ENCODE measurements at regions of chr12 and their contacts with region 1.

Region 1: GRCh38 chr12:89826468-89826867 is 117.8 kb upstream of the ATP2B1 start:
- DNase-seq: no peak
- H3K4me3 ChIP-seq: no peak overlapping the region
- H3K27ac ChIP-seq: no peak overlapping the region
- H3K4me1 ChIP-seq: peaks cover 12% of the 10 kb centered on the region
- H3K27me3 ChIP-seq: no peaks in the 10 kb centered on the region
- CTCF ChIP-seq: no peak

Region 2: GRCh38 chr12:89678225-89678624 is 148.2 kb before region 1 on chr12:
- CTCF ChIA-PET with region 1: no interaction called
- POLR2A ChIA-PET with region 1: no interaction called
- intact Hi-C with region 1: no loop called
- DNase-seq: no peak
- H3K4me3 ChIP-seq: no peak overlapping the region
- H3K27ac ChIP-seq: no peak overlapping the region
- H3K4me1 ChIP-seq: peaks cover 11% of the 10 kb centered on the region
- H3K27me3 ChIP-seq: no peaks in the 10 kb centered on the region
- CTCF ChIP-seq: no peak

Region 3: DNA sequence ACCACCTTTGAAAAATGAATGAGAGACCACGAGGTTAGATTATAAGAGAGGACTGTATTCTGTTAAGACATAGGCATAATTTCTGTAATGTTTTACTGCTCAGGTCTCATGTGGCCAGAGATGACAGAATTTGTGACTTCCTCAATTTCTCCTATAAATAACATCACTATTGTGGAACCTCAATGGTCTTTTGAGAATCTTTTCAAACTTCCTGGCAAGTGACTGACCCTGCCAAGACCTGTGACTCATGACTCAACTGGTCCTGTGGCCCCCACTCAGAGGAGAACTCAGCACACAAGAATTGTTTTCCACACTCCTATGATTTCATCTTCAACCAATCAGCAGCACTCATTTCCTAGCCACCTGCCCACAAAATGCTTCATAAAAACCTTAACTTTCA is 390.3 kb after region 1 on chr12:
- CTCF ChIA-PET with region 1: no interaction called
- POLR2A ChIA-PET with region 1: interaction called, 13 read pairs
- intact Hi-C with region 1: no loop called
- DNase-seq: no peak
- H3K4me3 ChIP-seq: no peak overlapping the region
- H3K27ac ChIP-seq: no peak overlapping the region
- H3K4me1 ChIP-seq: peaks cover 6% of the 10 kb centered on the region
- H3K27me3 ChIP-seq: no peaks in the 10 kb centered on the region
- CTCF ChIP-seq: no peak